Activated CD8-positive, alpha-beta T cell treated with anti-CD3 and anti-CD28 coated beads, Interleukin-2, amount 10 ng/mL, durations not matched to agents 7 days and 5 days (primary cell): ENCODE measurements at regions of chr19 and their contacts with region 1.

Region 1: GRCh38 chr19:46717034-46717723 is at the start of gene PRKD2:
- DNase-seq: peak; percentile 93
- ATAC-seq: peak; percentile 43
- H3K4me3 Mint-ChIP-seq: peak within 1 kb of the TSS; percentile 94
- H3K27ac Mint-ChIP-seq: peak within 1 kb of the TSS; percentile 98
- H3K4me1 Mint-ChIP-seq: peaks cover 53% of the 10 kb centered on the region
- H3K27me3 Mint-ChIP-seq: no peaks in the 10 kb centered on the region
- total RNA-seq, gene PRKD2: 161 to 166 TPM

Region 2: GRCh38 chr19:46746281-46747013 is 29.3 kb after region 1 on chr19 and contains the start of gene STRN4:
- CTCF ChIA-PET with region 1: interaction called, 9 read pairs
- POLR2A ChIA-PET with region 1: interaction called, 10 read pairs
- DNase-seq: peak; percentile 65
- ATAC-seq: peak; percentile 56
- H3K4me3 Mint-ChIP-seq: peak within 1 kb of the TSS; percentile 94
- H3K27ac Mint-ChIP-seq: peak within 1 kb of the TSS; percentile 86
- H3K4me1 Mint-ChIP-seq: peaks cover 52% of the 10 kb centered on the region
- H3K27me3 Mint-ChIP-seq: no peaks in the 10 kb centered on the region
- total RNA-seq, gene STRN4: 79.6 to 90.2 TPM

Region 3: DNA sequence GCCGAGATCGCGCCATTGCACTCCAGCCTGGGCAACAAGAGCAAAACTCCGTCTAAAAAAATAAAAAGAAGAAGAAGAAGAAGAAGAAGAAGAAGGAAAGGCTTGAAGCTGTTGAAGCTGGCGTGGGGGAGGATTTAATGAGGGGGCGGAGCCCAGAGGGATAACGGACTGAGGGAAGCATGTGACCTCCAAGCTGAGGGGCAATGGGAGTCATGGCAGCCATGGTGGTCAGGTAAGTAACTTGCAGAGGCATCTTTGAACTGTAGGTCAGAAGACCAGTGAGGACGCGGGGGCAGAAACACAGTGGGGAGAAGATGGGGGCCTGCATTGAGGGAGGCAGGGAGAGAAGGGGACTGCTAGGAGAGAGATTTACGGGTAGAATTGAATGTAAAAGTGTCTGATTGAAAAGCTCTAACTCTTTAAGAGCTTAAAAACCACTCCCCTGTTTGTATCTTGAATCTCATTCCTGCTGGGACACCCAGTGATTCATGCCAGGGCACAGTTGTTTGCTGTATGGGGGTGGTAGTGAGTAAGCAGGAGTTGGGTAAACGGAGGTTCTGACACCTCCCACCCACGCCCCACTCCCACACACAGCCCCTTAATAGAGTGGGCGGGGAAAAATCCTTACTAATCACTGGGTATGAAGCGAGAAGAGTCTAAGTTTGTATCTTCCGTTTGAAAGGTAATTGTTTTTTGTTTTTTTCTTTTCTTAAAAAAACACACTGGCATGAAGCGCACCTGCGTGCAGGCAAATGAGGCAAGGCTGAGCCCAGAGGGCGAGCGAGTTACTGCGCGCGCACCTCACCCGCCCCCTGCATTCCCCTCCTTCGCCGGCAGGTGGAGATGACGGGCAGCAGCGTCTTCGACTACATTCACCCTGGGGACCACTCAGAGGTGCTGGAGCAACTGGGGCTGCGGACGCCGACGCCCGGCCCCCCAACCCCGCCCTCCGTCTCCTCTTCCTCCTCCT is 318.2 kb after region 1 on chr19:
- CTCF ChIA-PET with region 1: no interaction called
- POLR2A ChIA-PET with region 1: no interaction called
- DNase-seq: peak; percentile 96
- ATAC-seq: peak; percentile 95
- H3K4me3 Mint-ChIP-seq: peak overlapping the region; percentile 87
- H3K27ac Mint-ChIP-seq: peak overlapping the region; percentile 80
- H3K4me1 Mint-ChIP-seq: peaks cover 21% of the 10 kb centered on the region
- H3K27me3 Mint-ChIP-seq: peaks cover 16% of the 10 kb centered on the region